PC-9 (cell line): ENCODE measurements at regions of chr3 and their contacts with region 1.

Region 1: DNA sequence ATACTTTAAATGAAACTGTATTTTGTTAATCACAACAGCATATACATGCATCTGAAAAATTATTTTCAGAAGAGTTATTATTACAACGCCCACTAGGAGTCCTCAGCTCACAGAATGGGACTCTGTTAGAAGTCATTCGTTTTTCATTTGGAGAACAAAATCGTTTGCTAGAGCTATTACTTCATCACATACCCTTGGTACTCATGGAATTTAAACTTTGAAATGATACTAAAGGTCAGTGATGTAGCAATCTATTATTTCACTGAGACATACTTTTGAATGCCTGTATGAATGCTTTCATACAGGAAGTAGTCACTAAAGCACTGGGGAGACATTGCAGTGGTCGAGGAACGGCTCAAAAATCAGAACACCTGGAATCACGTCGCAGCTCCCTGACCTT is 198.1 kb downstream of the MBNL1 start:
- DNase-seq: peak in 1 of 2 experiments; percentile 42
- H3K4me3 ChIP-seq: no peak overlapping the region
- H3K27ac ChIP-seq: no peak overlapping the region
- H3K4me1 ChIP-seq: no peaks in the 10 kb centered on the region
- H3K27me3 ChIP-seq: no peaks in the 10 kb centered on the region
- CTCF ChIP-seq: peak; percentile 57

Region 2: DNA sequence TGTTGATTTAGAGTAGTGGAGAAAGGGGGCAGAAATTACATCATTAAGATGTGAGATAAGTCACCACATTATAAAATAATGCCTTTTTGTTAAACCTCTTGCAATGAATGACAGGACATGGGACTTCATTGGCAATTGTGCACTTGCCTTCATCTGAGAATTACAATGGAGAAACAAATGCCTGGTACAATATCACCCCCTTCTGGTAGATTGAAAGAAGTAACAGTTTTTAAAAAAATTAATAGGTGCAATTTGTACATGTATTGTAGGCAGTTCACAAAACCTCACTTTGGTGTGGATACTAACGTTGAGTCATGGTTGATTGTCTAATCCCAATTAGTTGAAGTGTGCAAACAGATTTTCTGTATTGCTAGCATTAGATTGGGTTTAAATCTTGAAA is 1183.9 kb before region 1 on chr3:
- CTCF ChIA-PET with region 1: no interaction called
- POLR2A ChIA-PET with region 1: no interaction called
- intact Hi-C with region 1: no loop called
- DNase-seq: peak in 1 of 2 experiments; percentile 54
- H3K4me3 ChIP-seq: no peak overlapping the region
- H3K27ac ChIP-seq: no peak overlapping the region
- H3K4me1 ChIP-seq: peaks cover 8% of the 10 kb centered on the region
- H3K27me3 ChIP-seq: no peaks in the 10 kb centered on the region
- CTCF ChIP-seq: peak; percentile 91

Region 3: DNA sequence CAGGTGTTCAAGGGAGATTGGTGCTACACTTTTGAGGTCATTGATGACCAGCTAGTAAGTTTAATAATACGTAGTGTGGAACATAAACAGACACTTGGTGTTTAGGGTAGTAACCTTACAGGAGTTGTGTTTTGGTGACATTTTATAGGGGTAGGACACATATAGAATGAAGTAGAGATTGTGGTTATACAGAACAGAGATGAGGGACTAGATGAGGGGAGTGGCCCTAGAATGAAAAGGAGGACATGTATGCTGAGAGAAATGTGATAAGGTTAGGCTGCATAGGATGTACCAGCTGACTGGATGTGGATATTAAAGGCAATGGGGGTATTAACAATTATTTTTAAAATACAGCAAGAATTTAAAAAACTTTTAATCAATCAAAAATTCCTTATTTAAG is 190.1 kb before region 1 on chr3:
- CTCF ChIA-PET with region 1: interaction called, 14 read pairs
- POLR2A ChIA-PET with region 1: no interaction called
- intact Hi-C with region 1: no loop called
- DNase-seq: no peak
- H3K4me3 ChIP-seq: no peak overlapping the region
- H3K27ac ChIP-seq: 0 out of 2 replicates have a peak overlapping the region, but pooled peaks have one; percentile 2
- H3K4me1 ChIP-seq: peaks cover 17% of the 10 kb centered on the region
- H3K27me3 ChIP-seq: no peaks in the 10 kb centered on the region
- CTCF ChIP-seq: no peak

Region 4: GRCh38 chr3:152550284-152550683 is 83.5 kb after region 1 on chr3:
- CTCF ChIA-PET with region 1: no interaction called
- POLR2A ChIA-PET with region 1: no interaction called
- intact Hi-C with region 1: no loop called
- DNase-seq: no peak
- H3K4me3 ChIP-seq: no peak overlapping the region
- H3K27ac ChIP-seq: no peak overlapping the region
- H3K4me1 ChIP-seq: no peaks in the 10 kb centered on the region
- H3K27me3 ChIP-seq: no peaks in the 10 kb centered on the region
- CTCF ChIP-seq: no peak